Dendritic cell treated with granulocyte-macrophage colony-stimulating factor and Interleukin-4, amounts not matched to agents 40 ng/mL and 50 ng/mL, for 4 days (primary cell): ENCODE measurements at regions of chr19 and their contacts with region 1.

Region 1: DNA sequence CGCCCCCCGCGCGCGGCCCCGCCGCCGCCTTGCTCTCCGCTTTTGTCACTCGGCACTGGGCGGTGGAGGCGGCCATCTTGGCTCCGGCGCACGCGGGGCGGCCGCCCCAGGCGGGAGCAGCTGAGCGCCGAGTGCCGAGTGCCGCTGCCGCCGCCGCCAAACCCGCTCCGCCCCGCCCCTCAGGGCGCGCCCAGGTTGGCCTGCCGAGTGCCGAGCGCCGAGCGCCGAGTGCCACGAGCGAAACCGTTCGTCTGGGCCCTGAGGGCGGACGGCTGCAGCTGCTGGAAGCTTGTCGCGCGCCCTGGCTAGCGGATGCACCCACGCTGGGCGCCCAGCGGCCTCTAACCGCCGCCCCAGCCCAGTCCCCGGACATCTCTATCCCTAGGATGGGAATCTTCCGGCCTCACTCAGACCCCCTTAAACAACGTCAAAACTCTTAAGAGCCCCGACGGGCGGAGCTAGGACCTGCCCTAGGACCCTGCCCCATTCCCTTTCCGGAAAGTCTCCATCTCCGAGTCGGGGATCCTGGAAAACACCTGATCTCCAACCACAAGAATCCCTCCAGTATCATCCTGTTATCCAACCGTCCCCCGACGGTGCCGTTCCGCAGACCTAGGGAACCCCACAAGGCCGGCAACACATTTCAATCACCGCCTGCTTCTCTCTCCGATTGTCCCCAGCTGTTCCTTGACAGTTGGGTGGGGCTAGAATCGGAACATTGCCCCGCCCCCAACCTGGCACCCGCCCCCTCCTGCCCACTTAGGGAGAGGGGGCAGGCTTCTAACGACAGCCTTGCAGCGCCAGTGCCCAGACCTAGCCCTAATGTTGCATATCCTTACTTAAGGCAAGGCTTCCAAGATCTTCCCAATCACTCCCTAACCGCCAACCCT is 14.1 kb upstream of the AKAP8L start:
- H3K4me3 Mint-ChIP-seq: peak overlapping the region; percentile 86
- H3K27ac Mint-ChIP-seq: peak overlapping the region; percentile 92
- H3K4me1 Mint-ChIP-seq: peaks cover 32% of the 10 kb centered on the region
- H3K27me3 Mint-ChIP-seq: no peaks in the 10 kb centered on the region

Region 2: DNA sequence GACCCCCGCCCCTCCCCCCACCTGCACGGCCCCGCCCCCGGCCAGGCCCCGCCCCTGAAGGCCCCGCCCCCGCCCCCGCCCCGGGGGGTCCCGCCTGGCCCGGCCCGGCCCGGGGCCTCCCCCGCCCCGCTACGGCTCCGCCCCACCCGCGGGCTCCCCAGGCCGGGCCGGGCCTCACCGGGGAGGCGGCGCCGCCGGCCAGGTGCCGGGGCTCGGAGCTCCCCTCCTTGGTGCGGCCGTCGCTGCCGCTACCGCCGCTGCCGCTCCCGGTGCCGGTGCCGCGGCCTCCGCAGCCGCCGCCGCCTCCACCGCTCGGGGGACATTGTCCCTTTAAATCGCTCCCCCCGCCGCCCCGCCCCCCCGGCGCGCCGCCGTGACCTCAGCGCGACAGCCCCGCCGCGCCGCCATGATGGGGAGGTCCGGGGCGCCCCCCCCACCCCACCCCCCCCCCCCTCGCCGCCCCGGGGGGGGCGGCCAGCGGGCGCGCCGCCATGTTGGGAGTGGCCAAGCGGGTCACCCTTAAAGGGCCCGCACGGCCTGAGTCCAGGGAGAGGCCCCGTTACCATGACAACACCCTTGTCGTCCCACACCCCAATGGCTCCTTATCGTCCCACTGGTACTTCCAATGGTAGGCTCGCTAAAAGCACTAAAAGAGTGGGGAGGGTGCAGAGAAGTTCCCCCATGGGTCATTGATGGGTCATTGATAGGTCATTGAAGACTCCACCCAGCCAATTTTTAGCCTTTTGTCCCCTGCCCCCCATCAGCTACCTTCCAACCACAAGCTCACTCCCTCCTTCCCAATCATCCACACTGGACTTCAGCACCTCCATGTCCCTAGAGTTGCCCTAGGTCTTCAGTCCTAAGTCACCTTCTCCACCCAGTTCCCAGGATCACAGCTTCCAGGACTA is 17.0 kb after region 1 on chr19 and contains the start of gene WIZ:
- intact Hi-C with region 1: loop called (anchors 1 kb)
- H3K4me3 Mint-ChIP-seq: peak within 1 kb of the TSS; percentile 63
- H3K27ac Mint-ChIP-seq: peak within 1 kb of the TSS; percentile 74
- H3K4me1 Mint-ChIP-seq: peaks cover 16% of the 10 kb centered on the region
- H3K27me3 Mint-ChIP-seq: no peaks in the 10 kb centered on the region